Activated CD4-positive, alpha-beta T cell treated with anti-CD3 and anti-CD28 coated beads for 36 hours (primary cell): ENCODE measurements at regions of chr3 and their contacts with region 1.

Region 1: GRCh38 chr3:196568246-196569002 is at the starts of genes FBXO45 and WDR53:
- DNase-seq: peak; percentile 98
- ATAC-seq: peak; percentile 93
- H3K4me3 Mint-ChIP-seq: peak within 1 kb of the TSS; percentile 88
- H3K27ac Mint-ChIP-seq: peak within 1 kb of the TSS; percentile 93
- H3K4me1 Mint-ChIP-seq: peaks cover 45% of the 10 kb centered on the region
- H3K27me3 Mint-ChIP-seq: no peaks in the 10 kb centered on the region
- total RNA-seq, gene FBXO45: 12.7 to 16.2 TPM
- total RNA-seq, gene WDR53: 12.8 to 21.4 TPM

Region 2: DNA sequence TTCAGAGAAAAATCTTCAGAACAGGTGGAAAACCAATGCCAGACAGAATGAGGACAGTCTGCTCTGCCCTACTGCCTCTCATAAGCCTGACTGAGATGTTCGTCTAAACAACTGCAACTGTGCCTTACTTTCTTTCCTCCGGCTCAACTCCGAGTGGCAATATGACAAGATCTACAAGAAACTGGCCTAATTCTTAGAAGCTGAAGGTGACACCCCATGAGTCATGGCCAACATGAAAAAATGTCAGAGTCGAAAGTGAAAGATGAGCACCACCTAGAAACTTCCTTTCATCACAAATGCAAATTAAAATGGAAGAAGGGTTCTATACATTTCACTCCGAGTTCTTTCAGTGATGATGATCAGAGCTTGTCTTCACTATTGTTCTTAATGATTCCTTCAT is 293.8 kb before region 1 on chr3:
- CTCF ChIA-PET with region 1: no interaction called
- POLR2A ChIA-PET with region 1: no interaction called
- intact Hi-C with region 1: loop called in 1 of 2 experiments (anchors 1 kb)
- DNase-seq: peak; percentile 79
- ATAC-seq: peak; percentile 84
- H3K4me3 Mint-ChIP-seq: peak overlapping the region; percentile 56
- H3K27ac Mint-ChIP-seq: peak overlapping the region; percentile 95
- H3K4me1 Mint-ChIP-seq: peaks cover 65% of the 10 kb centered on the region
- H3K27me3 Mint-ChIP-seq: no peaks in the 10 kb centered on the region

Region 3: DNA sequence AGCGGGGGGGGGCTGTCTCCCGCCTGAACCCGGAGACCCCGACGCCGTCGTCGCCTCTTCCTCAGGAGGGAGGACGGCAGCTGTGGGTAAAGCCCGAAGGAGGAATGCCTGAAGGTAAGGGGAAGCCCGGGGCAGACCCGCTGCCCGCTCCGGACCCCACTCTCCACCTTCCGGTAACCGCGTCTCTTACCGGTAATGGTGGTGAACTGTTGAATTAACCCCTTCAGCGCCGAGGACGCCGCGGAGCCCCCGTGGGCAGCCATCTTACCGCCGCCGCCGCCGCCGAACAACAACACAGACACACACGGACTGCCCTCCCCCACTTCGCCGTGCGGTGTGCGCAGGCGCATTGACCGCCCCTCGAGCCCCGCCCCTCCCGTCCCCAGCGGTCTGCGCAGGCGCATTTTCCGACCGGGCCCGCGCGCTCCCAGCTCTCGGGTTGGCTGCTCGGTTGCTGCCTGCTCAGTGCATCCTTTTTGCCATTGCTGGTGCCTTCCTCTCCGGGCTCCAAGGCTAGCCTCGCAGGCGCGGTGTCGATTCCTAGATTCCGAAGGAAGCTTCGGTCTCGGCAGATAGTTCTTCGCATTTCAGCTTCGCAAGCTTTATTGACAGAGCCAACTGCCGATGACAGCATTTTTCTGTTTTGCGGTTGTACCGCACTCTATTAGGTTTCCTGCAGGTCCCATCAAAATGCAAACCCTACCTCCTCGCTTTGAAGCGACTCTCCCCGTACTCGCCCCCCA is 136.1 kb before region 1 on chr3 and contains the start of gene UBXN7:
- CTCF ChIA-PET with region 1: no interaction called
- POLR2A ChIA-PET with region 1: no interaction called
- intact Hi-C with region 1: loop called in 1 of 2 experiments (anchors 1 kb)
- DNase-seq: peak; percentile 98
- ATAC-seq: peak; percentile 89
- H3K4me3 Mint-ChIP-seq: peak within 1 kb of the TSS; percentile 79
- H3K27ac Mint-ChIP-seq: peak within 1 kb of the TSS; percentile 95
- H3K4me1 Mint-ChIP-seq: peaks cover 20% of the 10 kb centered on the region
- H3K27me3 Mint-ChIP-seq: no peaks in the 10 kb centered on the region
- total RNA-seq, gene UBXN7: 67.2 to 102 TPM

Region 4: DNA sequence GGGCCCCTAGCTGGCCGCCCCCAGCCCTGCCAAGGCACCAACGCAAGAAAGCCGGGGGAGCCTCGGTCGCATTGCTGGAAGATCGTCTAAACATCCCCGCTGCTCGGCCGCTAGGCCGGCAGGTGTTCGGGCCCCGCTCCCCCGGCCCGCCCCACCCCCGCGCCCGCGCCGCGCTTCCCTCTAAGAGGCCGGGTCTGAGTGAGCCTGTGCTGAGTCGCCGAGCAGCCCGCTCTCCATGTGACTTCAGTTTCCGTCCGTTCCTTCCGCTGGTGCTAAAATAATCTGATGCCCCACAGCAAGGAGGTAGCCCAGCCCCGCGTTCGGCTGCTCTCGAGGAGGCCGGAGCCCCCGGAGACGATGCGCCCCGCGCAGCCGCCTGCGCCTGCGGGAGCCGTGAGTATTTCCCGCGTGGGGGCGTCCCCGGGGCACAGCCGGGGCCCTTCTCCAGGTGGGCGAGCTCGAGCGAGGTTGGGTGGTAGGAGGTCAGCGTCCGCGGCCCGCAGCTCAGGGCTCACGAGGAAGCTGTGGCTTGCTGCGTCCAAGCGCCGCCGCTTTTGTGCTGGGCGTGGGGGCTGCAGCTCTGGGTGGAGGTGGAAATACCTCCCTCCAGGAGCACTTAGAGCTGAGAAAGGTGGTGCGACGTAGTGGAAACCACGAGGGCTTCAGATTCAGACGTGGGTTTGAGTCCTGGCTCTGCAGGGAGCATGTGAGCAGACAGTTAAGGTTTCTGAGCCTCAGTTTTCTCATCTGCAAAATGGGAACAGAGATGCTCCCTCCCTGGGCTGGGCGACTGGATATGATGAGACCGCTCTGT is 71.3 kb after region 1 on chr3 and contains the start of gene NRROS:
- CTCF ChIA-PET with region 1: no interaction called
- POLR2A ChIA-PET with region 1: interaction called, 3 read pairs
- intact Hi-C with region 1: loop called (anchors 2 kb)
- DNase-seq: peak; percentile 86
- ATAC-seq: peak; percentile 65
- H3K4me3 Mint-ChIP-seq: peak within 1 kb of the TSS; percentile 81
- H3K27ac Mint-ChIP-seq: peak within 1 kb of the TSS; percentile 98
- H3K4me1 Mint-ChIP-seq: peaks cover 62% of the 10 kb centered on the region
- H3K27me3 Mint-ChIP-seq: no peaks in the 10 kb centered on the region
- total RNA-seq, gene NRROS: 19.6 to 19.7 TPM

Region 5: DNA sequence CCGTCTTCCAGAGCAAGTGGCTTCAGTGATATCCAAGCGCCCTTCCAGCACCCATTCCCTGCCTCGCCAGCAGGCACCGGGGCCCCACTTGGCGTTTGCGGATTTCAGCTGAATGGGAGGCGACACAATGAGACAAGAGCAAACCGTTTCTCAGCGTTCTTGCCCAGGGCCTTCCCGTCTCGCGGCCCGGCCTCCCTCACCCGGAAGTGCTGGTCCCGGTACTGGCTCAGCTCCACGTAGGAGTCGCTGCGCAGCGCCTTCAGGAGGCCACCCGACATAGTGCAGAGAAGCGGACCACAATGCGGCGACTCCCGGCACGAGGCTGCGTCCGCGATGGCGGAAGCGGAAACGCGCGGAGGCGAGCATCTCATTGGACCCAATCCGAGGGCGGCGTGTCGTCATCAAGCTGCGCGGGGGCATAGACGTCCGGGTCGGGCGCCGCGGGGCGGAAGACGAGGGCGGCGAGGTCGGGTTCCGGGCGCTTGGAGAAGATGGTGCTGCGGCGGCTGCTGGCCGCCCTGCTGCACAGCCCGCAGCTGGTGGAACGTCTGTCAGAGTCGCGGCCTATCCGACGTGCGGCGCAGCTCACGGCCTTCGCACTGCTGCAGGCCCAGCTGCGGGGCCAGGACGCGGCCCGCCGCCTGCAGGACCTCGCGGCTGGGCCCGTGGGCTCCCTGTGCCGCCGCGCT is 373.9 kb after region 1 on chr3 and contains the start of gene NCBP2:
- CTCF ChIA-PET with region 1: no interaction called
- POLR2A ChIA-PET with region 1: no interaction called
- intact Hi-C with region 1: loop called (anchors 1 kb)
- DNase-seq: peak; percentile 100
- ATAC-seq: peak; percentile 97
- H3K4me3 Mint-ChIP-seq: peak within 1 kb of the TSS; percentile 93
- H3K27ac Mint-ChIP-seq: peak within 1 kb of the TSS; percentile 99
- H3K4me1 Mint-ChIP-seq: peaks cover 45% of the 10 kb centered on the region
- H3K27me3 Mint-ChIP-seq: no peaks in the 10 kb centered on the region
- total RNA-seq, gene NCBP2: 94.8 to 107 TPM